WTC11 (cell line): ENCODE measurements at regions of chr9 and their contacts with region 1.

Region 1: DNA sequence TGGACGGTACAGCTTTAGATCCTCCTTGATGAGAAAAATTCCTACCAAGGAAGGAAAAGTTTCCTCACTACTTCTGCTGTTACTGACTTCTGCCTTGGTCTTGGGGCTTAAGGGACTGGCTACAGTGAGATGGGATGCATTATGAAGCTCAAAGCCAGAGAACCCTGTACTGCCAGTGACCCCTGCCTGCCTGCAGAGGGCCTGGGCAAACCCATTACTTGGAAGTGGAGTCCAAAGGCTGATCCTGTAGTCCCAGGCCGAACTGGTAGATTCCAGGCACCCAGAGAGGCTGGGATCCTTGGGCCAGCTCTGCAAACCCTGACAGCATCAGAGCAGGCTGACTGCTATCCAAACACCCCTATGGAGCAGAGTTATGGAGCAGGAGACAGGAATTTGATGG is 25.7 kb upstream of the NR5A1 start:
- DNase-seq: no peak
- ATAC-seq: peak; percentile 57
- H3K4me3 Mint-ChIP-seq: no peak overlapping the region
- H3K27ac Mint-ChIP-seq: peak overlapping the region; percentile 73; the same call in 1 of the 2 replicates
- H3K4me1 Mint-ChIP-seq: no peaks in the 10 kb centered on the region
- H3K27me3 Mint-ChIP-seq: no peaks in the 10 kb centered on the region
- CTCF ChIP-seq: no peak

Region 2: DNA sequence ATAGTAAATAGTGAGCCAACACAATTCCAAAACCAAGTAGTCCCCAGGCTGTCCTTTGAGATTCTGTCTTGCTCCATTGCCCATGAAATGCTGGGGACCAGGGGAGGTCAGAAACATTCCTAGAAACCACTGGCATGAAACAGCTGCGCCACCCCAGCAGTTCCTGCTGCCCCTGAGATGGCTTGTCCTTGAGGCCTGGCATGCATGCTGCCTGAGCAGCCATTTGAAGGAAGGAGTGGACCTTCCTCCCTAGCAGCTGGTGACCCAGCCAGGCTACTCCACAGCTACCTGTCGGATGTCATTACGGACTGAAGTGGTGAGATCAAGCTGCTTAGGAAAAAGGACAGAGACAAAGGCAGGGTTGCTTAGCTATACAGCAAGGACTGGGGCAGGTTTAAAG is 863.6 kb before region 1 on chr9:
- CTCF ChIA-PET with region 1: no interaction called
- POLR2A ChIA-PET with region 1: no interaction called
- DNase-seq: no peak
- ATAC-seq: no peak; the same call in 1 of the 2 replicates
- H3K4me3 Mint-ChIP-seq: no peak overlapping the region
- H3K27ac Mint-ChIP-seq: no peak overlapping the region
- H3K4me1 Mint-ChIP-seq: peaks cover 7% of the 10 kb centered on the region; the same call in 1 of the 2 replicates
- H3K27me3 Mint-ChIP-seq: no peaks in the 10 kb centered on the region
- CTCF ChIP-seq: no peak

Region 3: GRCh38 chr9:124477806-124478285 is 55.1 kb before region 1 on chr9:
- CTCF ChIA-PET with region 1: interaction called, 12 read pairs
- POLR2A ChIA-PET with region 1: no interaction called
- DNase-seq: peak; percentile 57
- ATAC-seq: peak; percentile 15
- H3K4me3 Mint-ChIP-seq: peak overlapping the region; percentile 60
- H3K27ac Mint-ChIP-seq: no peak overlapping the region
- H3K4me1 Mint-ChIP-seq: peaks cover 29% of the 10 kb centered on the region
- H3K27me3 Mint-ChIP-seq: peaks cover 56% of the 10 kb centered on the region
- CTCF ChIP-seq: no peak

Region 4: GRCh38 chr9:124522121-124523098 is 10.5 kb before region 1 on chr9:
- CTCF ChIA-PET with region 1: interaction called, 41 read pairs
- POLR2A ChIA-PET with region 1: no interaction called
- DNase-seq: peak; percentile 75
- ATAC-seq: peak; percentile 97
- H3K4me3 Mint-ChIP-seq: no peak overlapping the region
- H3K27ac Mint-ChIP-seq: peak overlapping the region; percentile 80
- H3K4me1 Mint-ChIP-seq: 0 out of 2 replicates have a peak, but pooled peaks cover 3% of the 10 kb centered on the region
- H3K27me3 Mint-ChIP-seq: no peaks in the 10 kb centered on the region
- CTCF ChIP-seq: no peak

Region 5: DNA sequence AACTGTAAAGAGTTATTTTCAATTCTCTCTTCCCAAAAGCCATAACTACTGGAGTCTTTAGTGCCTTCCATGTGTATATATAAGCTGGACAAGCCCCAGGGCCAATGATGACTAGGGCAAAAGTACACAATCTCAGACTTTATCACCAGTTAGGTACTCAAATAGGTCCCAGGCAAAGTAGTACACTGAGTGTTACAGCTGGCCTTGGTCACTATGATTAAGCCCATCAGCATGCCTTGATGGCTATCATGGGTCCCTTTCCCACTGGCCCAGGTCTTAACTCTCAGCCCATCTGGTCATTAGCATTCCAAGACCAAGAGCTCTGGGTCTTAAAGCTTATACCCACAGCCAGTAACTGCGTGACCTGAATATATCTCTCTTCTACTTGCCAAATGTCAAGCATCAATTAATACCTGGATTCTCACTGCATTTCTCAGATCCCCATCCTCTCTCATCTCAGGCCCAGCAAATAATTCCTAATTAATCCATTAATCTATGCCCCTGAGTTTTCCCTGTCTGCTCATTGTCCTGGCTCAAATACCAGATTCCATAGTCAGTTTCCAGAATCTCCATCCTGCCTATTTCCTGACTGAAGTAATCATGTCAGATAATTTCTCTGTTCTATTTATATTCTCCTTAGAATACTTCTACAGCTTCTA is 175.9 kb after region 1 on chr9:
- CTCF ChIA-PET with region 1: interaction called, 17 read pairs
- POLR2A ChIA-PET with region 1: no interaction called
- DNase-seq: no peak
- ATAC-seq: no peak
- H3K4me3 Mint-ChIP-seq: no peak overlapping the region
- H3K27ac Mint-ChIP-seq: peak overlapping the region; percentile 91; the same call in 1 of the 2 replicates
- H3K4me1 Mint-ChIP-seq: peaks cover 50% of the 10 kb centered on the region
- H3K27me3 Mint-ChIP-seq: no peaks in the 10 kb centered on the region
- CTCF ChIP-seq: no peak

Region 6: GRCh38 chr9:125024917-125025316 is 492.0 kb after region 1 on chr9:
- CTCF ChIA-PET with region 1: no interaction called
- POLR2A ChIA-PET with region 1: no interaction called
- DNase-seq: no peak
- ATAC-seq: no peak
- H3K4me3 Mint-ChIP-seq: no peak overlapping the region
- H3K27ac Mint-ChIP-seq: no peak overlapping the region
- H3K4me1 Mint-ChIP-seq: 0 out of 2 replicates have a peak, but pooled peaks cover 3% of the 10 kb centered on the region
- H3K27me3 Mint-ChIP-seq: no peaks in the 10 kb centered on the region
- CTCF ChIP-seq: no peak